ENCODE measurements at regions of chr1 and their contacts with region 1.

Region 1: GRCh38 chr1:75908717-75909152 is 23.5 kb downstream of the ASB17 start:
- DNase-seq: peak; percentile 50
- ATAC-seq: peak; percentile 83
- H3K4me3 ChIP-seq: no peak overlapping the region
- H3K27ac ChIP-seq: no peak overlapping the region
- H3K4me1 ChIP-seq: no peaks in the 10 kb centered on the region
- H3K27me3 ChIP-seq: peaks cover 9% of the 10 kb centered on the region
- CTCF ChIP-seq: peak; percentile 62

Region 2: DNA sequence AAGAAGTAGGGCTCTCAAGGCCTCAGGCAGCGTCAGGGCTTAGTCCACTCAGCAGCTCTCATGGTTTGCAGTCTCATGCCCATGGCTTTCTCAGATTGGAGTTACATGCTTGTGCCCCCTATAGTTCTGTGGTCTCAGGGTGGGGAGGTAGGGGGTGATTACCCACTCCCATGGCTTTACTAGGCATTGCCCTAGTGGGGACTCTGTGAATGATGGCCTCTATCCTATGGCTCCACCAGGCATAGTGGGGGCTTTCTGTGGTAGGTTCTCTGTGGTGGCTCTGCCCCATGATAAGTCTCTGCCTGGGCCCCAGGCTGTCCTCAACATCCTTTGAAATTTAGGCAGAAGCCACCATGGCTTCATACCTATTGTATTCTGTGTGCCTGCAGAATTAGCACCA is 63.2 kb before region 1 on chr1:
- CTCF ChIA-PET with region 1: no interaction called
- POLR2A ChIA-PET with region 1: no interaction called
- in situ Hi-C with region 1: no loop called
- intact Hi-C with region 1: no loop called
- DNase-seq: no peak
- ATAC-seq: no peak
- H3K4me3 ChIP-seq: no peak overlapping the region
- H3K27ac ChIP-seq: no peak overlapping the region
- H3K4me1 ChIP-seq: no peaks in the 10 kb centered on the region
- H3K27me3 ChIP-seq: no peaks in the 10 kb centered on the region
- CTCF ChIP-seq: no peak

Region 3: DNA sequence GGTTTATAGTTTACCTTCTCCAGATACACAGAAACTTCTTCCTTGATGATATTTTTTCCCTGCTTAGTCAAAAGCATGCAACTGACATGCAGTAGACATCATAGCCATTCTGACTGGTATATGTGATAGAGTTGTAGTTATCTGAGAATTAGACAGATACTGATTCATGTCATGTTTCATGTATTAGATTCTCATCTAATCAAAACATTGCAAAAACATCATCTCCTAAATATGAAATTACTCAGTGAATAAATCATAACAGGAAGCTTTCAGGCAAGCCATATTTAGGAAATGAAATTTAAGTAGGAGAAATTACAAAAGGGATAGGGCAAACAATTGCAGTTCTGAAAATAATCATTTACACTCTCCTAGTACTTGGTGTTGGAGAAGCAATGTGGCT is 61.9 kb after region 1 on chr1:
- CTCF ChIA-PET with region 1: no interaction called
- POLR2A ChIA-PET with region 1: no interaction called
- in situ Hi-C with region 1: no loop called
- intact Hi-C with region 1: no loop called
- DNase-seq: no peak
- ATAC-seq: no peak
- H3K4me3 ChIP-seq: no peak overlapping the region
- H3K27ac ChIP-seq: no peak overlapping the region
- H3K4me1 ChIP-seq: no peaks in the 10 kb centered on the region
- H3K27me3 ChIP-seq: no peaks in the 10 kb centered on the region
- CTCF ChIP-seq: no peak

Region 4: DNA sequence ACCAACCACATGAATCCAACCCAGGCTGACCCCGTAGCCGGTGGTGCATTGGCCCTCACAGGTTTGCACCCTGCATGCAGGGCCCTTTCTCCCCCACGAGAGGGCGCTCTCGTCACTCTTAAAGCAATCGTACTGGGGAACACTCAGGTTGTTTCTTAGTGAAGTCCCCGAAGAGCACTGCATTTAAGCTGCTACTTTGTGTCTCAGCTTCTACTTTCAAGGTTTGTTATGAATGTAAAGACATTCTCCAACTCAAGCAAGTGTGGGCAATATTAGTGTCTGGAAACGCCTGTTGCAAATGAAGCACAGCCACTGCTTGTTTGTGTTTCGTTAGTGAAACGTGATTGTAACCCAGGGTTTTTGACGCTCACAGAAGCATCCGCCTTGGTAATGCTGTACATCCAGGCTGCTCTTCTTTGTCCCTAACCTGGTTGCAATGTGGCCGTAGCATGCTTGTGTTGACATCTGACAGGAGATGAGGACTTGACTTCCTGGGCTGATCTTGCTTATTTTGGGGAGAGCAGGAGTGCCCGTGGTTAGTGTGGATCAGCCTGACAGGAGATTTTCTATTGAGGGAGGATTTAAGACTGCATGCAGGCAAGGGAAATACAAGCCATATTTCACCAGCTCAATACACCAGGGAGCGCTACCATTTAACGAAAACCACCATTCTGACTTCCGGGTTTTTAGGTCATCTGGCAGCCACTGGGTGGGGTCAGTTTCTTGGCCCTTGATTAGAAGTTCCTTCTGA is 245.6 kb after region 1 on chr1:
- CTCF ChIA-PET with region 1: no interaction called
- POLR2A ChIA-PET with region 1: no interaction called
- in situ Hi-C with region 1: no loop called
- intact Hi-C with region 1: loop called (anchors 2 kb)
- DNase-seq: peak; percentile 64
- ATAC-seq: peak; percentile 98
- H3K4me3 ChIP-seq: peak overlapping the region; percentile 41 to 59
- H3K27ac ChIP-seq: no peak overlapping the region
- H3K4me1 ChIP-seq: no peaks in the 10 kb centered on the region
- H3K27me3 ChIP-seq: peaks cover 6% of the 10 kb centered on the region; the same call in 1 of the 2 replicates
- CTCF ChIP-seq: peak; percentile 93

Region 5: DNA sequence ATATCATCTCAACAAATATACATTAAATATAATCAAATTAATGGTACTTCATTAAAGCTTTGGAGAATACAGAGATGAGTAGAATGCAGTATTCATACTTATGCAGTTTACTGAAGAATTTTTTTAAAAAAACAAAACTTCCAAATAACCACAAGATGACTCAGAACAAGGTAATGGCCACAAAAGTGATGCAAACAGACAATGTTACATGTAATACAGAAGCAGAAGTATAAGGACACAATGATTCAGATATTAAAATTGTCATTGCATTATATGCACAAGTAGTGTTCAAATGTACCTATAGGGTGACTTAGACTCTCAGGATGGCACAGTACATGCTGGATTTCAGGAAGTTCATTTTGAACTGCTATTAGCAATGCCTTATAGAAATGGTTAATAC is 731.4 kb after region 1 on chr1:
- CTCF ChIA-PET with region 1: interaction called, 17 read pairs
- POLR2A ChIA-PET with region 1: no interaction called
- in situ Hi-C with region 1: no loop called
- intact Hi-C with region 1: no loop called
- DNase-seq: no peak
- ATAC-seq: no peak
- H3K4me3 ChIP-seq: no peak overlapping the region
- H3K27ac ChIP-seq: no peak overlapping the region
- H3K4me1 ChIP-seq: no peaks in the 10 kb centered on the region
- H3K27me3 ChIP-seq: no peaks in the 10 kb centered on the region
- CTCF ChIP-seq: no peak

Measured in Panc1 (cell line).